Activated CD8-positive, alpha-beta memory T cell treated with anti-CD3 and anti-CD28 coated beads, Interleukin-2, amount 10 ng/mL, durations not matched to agents 7 days and 5 days (primary cell): ENCODE measurements at regions of chr1 and their contacts with region 1.

Region 1: GRCh38 chr1:110495926-110496600 is 22.9 kb downstream of the KCNA10 start:
- DNase-seq: peak; percentile 87
- ATAC-seq: peak; percentile 86
- H3K4me3 Mint-ChIP-seq: no peak overlapping the region
- H3K27ac Mint-ChIP-seq: no peak overlapping the region
- H3K4me1 Mint-ChIP-seq: peaks cover 6% of the 10 kb centered on the region
- H3K27me3 Mint-ChIP-seq: no peaks in the 10 kb centered on the region

Region 2: DNA sequence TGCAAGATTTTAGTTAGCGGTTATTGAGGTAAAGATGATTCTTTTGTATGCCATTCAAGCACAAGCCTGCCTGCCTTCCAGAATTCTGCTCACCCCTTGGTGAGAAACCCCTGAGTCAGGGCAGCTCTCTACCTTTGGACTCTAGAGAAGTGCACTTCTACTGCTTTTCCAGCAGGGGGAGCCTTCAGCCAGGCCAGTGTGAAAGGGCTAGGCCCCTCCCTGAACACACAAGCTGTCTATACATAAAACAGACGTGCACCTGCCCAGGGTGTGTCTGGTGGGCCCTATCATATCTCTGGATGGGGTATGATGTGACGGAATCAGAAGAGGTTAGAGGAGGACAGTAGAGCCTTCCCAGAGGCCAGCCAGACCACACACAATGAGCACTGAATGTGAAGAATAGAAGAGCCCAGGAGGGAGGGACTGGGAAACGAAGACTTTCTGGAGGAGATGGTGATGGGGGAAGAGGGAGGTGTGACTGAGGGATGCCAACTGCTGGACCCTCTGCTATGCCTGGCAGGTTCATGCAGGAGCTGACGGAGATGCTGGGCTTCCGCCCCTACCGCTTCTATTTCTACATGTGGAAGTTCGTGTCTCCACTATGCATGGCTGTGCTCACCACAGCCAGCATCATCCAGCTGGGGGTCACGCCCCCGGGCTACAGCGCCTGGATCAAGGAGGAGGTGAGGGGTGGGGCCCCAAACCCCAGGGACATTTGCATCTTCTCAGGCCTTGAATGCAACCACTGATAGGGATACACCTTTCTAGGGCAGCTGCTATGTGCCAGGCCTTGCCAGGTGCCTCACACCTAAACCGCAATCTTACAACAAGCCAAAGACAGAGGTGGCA is 298.9 kb before region 1 on chr1:
- CTCF ChIA-PET with region 1: interaction called, 140 read pairs
- DNase-seq: peak; percentile 68
- ATAC-seq: peak; percentile 92
- H3K4me3 Mint-ChIP-seq: no peak overlapping the region
- H3K27ac Mint-ChIP-seq: no peak overlapping the region
- H3K4me1 Mint-ChIP-seq: no peaks in the 10 kb centered on the region
- H3K27me3 Mint-ChIP-seq: no peaks in the 10 kb centered on the region

Region 3: DNA sequence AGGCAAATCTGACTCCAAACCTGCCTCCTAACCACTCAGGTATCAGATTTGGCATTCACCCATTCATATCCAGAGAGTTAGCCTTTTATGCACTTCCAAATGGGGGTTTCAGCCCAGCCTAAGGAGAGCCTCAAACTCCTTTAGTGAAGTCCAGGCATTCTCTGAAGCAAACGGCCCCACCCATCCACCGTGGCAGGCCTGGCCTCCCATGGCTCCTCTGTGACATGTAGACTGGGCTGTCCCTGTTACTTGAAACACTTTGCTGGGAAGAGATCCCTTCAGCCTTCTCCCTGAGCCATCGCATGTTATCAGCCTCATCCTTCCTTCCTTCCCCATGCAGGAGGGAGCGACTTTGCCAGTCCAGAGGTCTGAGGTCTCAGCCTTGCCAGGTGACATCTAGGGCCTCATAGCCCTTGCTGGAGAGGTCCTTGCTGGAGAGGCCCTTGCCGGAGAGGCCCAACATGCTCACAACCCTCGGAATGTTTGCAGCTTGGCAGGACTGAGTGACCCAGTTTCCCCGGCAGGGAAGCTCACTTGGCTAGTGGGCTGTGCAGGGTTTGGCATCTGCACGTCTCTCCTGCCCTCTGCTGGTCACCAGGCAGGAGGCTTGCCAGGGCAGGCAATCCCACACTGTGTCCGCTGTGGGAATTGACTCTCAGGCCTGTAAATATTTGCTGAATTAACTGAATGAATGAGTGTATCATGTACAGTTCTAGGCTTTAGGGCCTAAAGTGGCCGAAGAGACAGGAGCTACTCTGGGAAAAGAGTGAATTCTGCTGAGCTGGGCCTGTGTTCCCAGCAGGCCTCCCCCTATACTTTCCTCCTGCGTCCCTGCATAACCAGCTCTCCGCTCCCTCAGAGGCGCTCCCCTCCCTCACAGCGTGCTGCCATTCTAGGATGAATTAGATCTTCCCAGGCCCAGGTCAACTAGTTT is 183.6 kb before region 1 on chr1:
- CTCF ChIA-PET with region 1: interaction called, 15 read pairs
- DNase-seq: peak; percentile 76
- ATAC-seq: peak; percentile 96
- H3K4me3 Mint-ChIP-seq: no peak overlapping the region
- H3K27ac Mint-ChIP-seq: no peak overlapping the region
- H3K4me1 Mint-ChIP-seq: no peaks in the 10 kb centered on the region
- H3K27me3 Mint-ChIP-seq: no peaks in the 10 kb centered on the region

Region 4: GRCh38 chr1:110370827-110371226 is 125.2 kb before region 1 on chr1:
- CTCF ChIA-PET with region 1: no interaction called
- DNase-seq: no peak
- ATAC-seq: peak; percentile 72
- H3K4me3 Mint-ChIP-seq: no peak overlapping the region
- H3K27ac Mint-ChIP-seq: peak overlapping the region; percentile 22
- H3K4me1 Mint-ChIP-seq: peaks cover 13% of the 10 kb centered on the region
- H3K27me3 Mint-ChIP-seq: no peaks in the 10 kb centered on the region

Region 5: GRCh38 chr1:110407260-110408210 is 88.5 kb before region 1 on chr1 and contains the start of gene LAMTOR5:
- CTCF ChIA-PET with region 1: interaction called, 42 read pairs
- DNase-seq: peak; percentile 96
- ATAC-seq: peak; percentile 95
- H3K4me3 Mint-ChIP-seq: peak within 1 kb of the TSS; percentile 98
- H3K27ac Mint-ChIP-seq: peak within 1 kb of the TSS; percentile 98
- H3K4me1 Mint-ChIP-seq: peaks cover 25% of the 10 kb centered on the region
- H3K27me3 Mint-ChIP-seq: no peaks in the 10 kb centered on the region
- total RNA-seq, gene LAMTOR5: 109 to 130 TPM

Region 6: GRCh38 chr1:110460253-110461220 is 35.5 kb before region 1 on chr1:
- CTCF ChIA-PET with region 1: interaction called, 45 read pairs
- DNase-seq: peak; percentile 89
- ATAC-seq: peak; percentile 90
- H3K4me3 Mint-ChIP-seq: no peak overlapping the region
- H3K27ac Mint-ChIP-seq: no peak overlapping the region
- H3K4me1 Mint-ChIP-seq: no peaks in the 10 kb centered on the region
- H3K27me3 Mint-ChIP-seq: peaks cover 2% of the 10 kb centered on the region

Region 7: DNA sequence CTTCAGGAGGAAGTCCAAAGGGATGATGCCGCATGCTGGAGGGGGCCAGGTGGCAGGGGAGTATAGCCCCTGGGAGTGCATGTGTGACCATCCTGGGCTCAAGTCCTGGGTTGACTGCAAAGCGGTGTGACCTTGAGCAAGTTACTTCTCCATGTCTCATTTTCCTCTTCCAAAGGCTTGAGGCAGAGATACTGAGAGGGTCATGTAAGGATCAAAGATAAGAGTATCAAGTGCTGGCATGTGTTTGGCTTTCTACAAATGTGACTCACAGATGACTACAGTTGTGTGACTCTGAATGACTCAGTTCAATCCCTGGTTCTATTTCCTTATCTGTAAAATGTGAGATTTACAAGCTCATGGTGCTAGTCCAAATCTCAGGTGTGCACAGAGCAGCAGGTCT is 19.0 kb before region 1 on chr1:
- CTCF ChIA-PET with region 1: interaction called, 20 read pairs
- DNase-seq: no peak
- ATAC-seq: no peak
- H3K4me3 Mint-ChIP-seq: no peak overlapping the region
- H3K27ac Mint-ChIP-seq: no peak overlapping the region
- H3K4me1 Mint-ChIP-seq: peaks cover 2% of the 10 kb centered on the region
- H3K27me3 Mint-ChIP-seq: no peaks in the 10 kb centered on the region

Region 8: GRCh38 chr1:110780600-110781484 is 284.8 kb after region 1 on chr1:
- CTCF ChIA-PET with region 1: interaction called, 14 read pairs
- DNase-seq: peak; percentile 86
- ATAC-seq: peak; percentile 78
- H3K4me3 Mint-ChIP-seq: no peak overlapping the region
- H3K27ac Mint-ChIP-seq: no peak overlapping the region
- H3K4me1 Mint-ChIP-seq: peaks cover 32% of the 10 kb centered on the region
- H3K27me3 Mint-ChIP-seq: peaks cover 5% of the 10 kb centered on the region